ENCODE measurements at regions of chr4 and their contacts with region 1.

Region 1: GRCh38 chr4:121192480-121192879 is 28.4 kb upstream of the TNIP3 start:
- DNase-seq: no peak
- H3K4me3 ChIP-seq: no peak overlapping the region
- H3K27ac ChIP-seq: no peak overlapping the region
- H3K4me1 ChIP-seq: no peaks in the 10 kb centered on the region
- H3K27me3 ChIP-seq: no peaks in the 10 kb centered on the region
- CTCF ChIP-seq: peak; percentile 88

Region 2: GRCh38 chr4:121252224-121252806 is 59.8 kb after region 1 on chr4:
- CTCF ChIA-PET with region 1: no interaction called
- POLR2A ChIA-PET with region 1: interaction called, 3 read pairs
- intact Hi-C with region 1: loop called (anchors 1 kb)
- DNase-seq: peak; percentile 48 to 51
- H3K4me3 ChIP-seq: no peak overlapping the region
- H3K27ac ChIP-seq: no peak overlapping the region
- H3K4me1 ChIP-seq: peaks cover 12% of the 10 kb centered on the region
- H3K27me3 ChIP-seq: no peaks in the 10 kb centered on the region
- CTCF ChIP-seq: peak; percentile 92

Region 3: DNA sequence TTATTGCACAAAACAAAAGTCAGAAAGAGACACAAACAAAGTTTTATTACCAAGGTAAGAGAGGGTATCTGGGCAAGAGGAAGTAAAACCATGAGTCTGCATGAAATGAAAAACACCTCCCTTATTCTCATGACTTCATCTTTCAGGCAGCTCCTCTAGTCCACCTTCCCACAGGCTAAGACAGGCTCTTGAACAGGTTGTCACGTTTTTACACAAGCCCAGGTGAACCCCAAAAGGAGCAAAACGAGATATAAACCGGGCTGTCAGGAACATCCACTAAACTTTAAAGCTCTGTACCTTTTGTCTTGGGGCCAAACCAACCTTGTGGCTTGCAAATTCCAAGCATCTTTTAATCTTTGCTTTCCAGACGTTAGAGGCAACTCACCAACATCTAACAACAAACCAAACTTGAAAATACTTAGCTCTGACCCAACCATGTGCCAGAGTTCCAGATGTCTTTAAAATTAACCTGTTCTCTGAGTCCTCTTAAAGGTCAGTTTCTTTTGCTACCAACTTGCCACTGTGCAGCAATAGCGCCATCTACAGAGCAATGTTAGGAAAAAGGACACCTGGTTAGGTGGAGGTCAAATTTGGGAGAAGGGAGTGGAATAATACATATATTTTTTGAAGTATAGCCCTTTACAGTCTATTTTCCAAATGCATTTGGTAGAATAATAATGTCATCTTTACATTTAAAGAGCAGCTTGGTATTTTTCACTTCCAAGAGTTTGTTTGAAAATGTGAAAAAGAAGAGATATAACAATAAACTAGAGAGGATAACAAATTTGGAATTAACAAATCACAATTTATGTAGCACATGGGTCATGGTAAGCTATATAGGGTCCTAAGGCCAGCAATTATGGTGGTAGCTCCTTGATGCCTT is 115.2 kb after region 1 on chr4:
- CTCF ChIA-PET with region 1: interaction called, 8 read pairs
- POLR2A ChIA-PET with region 1: no interaction called
- intact Hi-C with region 1: loop called (anchors 2 kb)
- DNase-seq: peak in 1 of 2 experiments; percentile 31
- H3K4me3 ChIP-seq: no peak overlapping the region
- H3K27ac ChIP-seq: peak overlapping the region; percentile 15; the same call in 1 of the 2 replicates
- H3K4me1 ChIP-seq: peaks cover 14% of the 10 kb centered on the region; the same call in 1 of the 2 replicates
- H3K27me3 ChIP-seq: no peaks in the 10 kb centered on the region
- CTCF ChIP-seq: peak; percentile 92

Region 4: DNA sequence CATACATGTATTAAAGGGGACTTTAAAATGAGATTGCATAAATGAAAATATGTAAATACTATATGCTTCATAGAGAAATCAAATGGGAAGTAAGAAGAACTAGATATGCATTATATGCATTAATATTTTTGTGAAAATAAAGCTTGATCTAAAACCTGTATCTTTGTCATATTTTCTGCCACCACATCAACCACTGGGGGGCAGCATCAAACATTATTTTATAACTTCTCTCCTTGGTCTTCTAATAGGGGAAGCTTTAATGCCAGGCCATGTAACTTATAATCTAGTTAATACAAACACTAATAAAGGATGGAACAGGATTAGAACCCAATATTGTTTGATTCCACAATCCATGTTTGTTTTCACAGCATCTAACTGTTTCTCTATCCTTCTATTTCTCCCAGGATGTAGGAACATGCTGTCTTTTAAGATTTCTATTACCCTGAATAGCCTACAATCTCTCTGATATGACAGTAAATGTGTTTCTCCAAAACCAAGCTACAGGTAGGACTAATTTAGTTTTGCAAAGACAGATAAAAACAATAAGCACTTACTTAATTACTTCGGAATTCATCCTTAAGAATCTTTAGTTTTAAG is 178.3 kb after region 1 on chr4:
- CTCF ChIA-PET with region 1: no interaction called
- POLR2A ChIA-PET with region 1: no interaction called
- intact Hi-C with region 1: loop called (anchors 1 kb)
- DNase-seq: peak in 1 of 2 experiments; percentile 33
- H3K4me3 ChIP-seq: no peak overlapping the region
- H3K27ac ChIP-seq: no peak overlapping the region
- H3K4me1 ChIP-seq: peaks cover 8% of the 10 kb centered on the region; the same call in 1 of the 2 replicates
- H3K27me3 ChIP-seq: no peaks in the 10 kb centered on the region
- CTCF ChIP-seq: peak; percentile 83

Region 5: DNA sequence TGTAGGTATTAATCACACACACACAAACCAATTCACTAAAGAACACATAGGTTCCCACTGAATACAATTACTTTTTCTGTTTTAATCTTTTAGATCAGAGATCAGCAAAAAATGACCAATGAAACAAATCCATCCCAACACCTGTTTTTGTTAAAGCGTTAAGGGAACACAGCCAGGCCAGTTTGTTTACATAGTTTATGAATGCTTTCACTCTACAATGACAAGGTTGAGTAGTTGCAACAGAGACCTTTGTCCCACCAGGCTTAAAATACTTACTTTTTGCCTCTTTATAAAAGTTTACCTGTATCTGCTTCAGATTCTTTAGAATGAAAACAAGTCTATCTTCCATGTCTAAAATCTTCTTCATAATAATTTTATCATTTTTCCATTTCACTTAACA is 308.4 kb after region 1 on chr4:
- CTCF ChIA-PET with region 1: no interaction called
- POLR2A ChIA-PET with region 1: no interaction called
- intact Hi-C with region 1: no loop called
- DNase-seq: no peak
- H3K4me3 ChIP-seq: no peak overlapping the region
- H3K27ac ChIP-seq: no peak overlapping the region
- H3K4me1 ChIP-seq: 0 out of 2 replicates have a peak, but pooled peaks cover 5% of the 10 kb centered on the region
- H3K27me3 ChIP-seq: no peaks in the 10 kb centered on the region
- CTCF ChIP-seq: no peak

Region 6: GRCh38 chr4:121656269-121656641 is 463.8 kb after region 1 on chr4:
- CTCF ChIA-PET with region 1: no interaction called
- POLR2A ChIA-PET with region 1: no interaction called
- intact Hi-C with region 1: loop called (anchors 5 kb)
- DNase-seq: peak in 1 of 2 experiments; percentile 5
- H3K4me3 ChIP-seq: no peak overlapping the region
- H3K27ac ChIP-seq: no peak overlapping the region
- H3K4me1 ChIP-seq: no peaks in the 10 kb centered on the region
- H3K27me3 ChIP-seq: no peaks in the 10 kb centered on the region
- CTCF ChIP-seq: peak; percentile 70

Region 7: GRCh38 chr4:121736735-121737351 is 544.4 kb after region 1 on chr4:
- CTCF ChIA-PET with region 1: interaction called, 3 read pairs
- POLR2A ChIA-PET with region 1: no interaction called
- intact Hi-C with region 1: loop called (anchors 2 kb)
- DNase-seq: peak; percentile 31 to 64
- H3K4me3 ChIP-seq: no peak overlapping the region
- H3K27ac ChIP-seq: no peak overlapping the region
- H3K4me1 ChIP-seq: no peaks in the 10 kb centered on the region
- H3K27me3 ChIP-seq: no peaks in the 10 kb centered on the region
- CTCF ChIP-seq: peak; percentile 90

Measured in PC-9 (cell line).